ENCODE measurements at regions of chr16 and their contacts with region 1.

Region 1: DNA sequence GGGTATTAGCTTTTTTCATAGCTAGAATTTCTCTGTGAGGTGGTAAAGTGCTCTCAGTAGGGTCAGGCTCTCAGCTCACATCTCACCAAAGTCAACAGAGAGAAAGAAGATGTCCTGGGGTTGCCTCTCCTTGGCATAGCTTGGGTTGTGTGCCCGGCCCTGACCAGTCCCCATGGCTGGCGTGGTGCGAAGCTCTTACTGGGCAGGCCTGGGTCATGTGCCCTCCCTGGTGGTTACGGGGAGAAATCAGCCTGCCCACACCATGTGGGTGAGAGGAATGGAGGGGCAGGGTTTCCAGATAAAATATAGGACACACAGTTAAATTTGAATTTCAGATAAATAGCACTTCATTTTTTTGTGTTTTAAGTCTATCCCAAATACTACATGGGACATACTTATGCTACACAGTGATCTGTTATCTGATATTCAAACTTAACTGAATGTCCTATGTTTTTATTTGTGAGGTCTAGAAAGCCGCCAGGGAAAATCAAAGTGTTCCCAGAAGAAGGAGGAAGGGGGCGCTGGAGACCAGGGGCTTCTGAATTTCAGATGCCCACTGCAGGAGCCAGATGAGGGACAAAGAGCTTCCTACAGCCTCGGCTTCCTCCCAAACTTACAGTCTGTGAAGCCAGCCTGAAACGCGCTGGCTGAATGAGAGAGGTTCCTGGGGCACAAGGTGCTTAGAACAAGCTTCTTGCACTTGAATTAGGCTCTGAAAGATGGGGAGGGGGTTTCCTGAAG is 45.4 kb downstream of the NKD1 start:
- DNase-seq: no peak
- H3K4me3 ChIP-seq: no peak overlapping the region
- H3K27ac ChIP-seq: no peak overlapping the region
- H3K4me1 ChIP-seq: peaks cover 14% of the 10 kb centered on the region
- H3K27me3 ChIP-seq: no peaks in the 10 kb centered on the region
- CTCF ChIP-seq: peak in 1 of 4 experiments; percentile 9
- POLR2A ChIP-seq: no peak

Region 2: DNA sequence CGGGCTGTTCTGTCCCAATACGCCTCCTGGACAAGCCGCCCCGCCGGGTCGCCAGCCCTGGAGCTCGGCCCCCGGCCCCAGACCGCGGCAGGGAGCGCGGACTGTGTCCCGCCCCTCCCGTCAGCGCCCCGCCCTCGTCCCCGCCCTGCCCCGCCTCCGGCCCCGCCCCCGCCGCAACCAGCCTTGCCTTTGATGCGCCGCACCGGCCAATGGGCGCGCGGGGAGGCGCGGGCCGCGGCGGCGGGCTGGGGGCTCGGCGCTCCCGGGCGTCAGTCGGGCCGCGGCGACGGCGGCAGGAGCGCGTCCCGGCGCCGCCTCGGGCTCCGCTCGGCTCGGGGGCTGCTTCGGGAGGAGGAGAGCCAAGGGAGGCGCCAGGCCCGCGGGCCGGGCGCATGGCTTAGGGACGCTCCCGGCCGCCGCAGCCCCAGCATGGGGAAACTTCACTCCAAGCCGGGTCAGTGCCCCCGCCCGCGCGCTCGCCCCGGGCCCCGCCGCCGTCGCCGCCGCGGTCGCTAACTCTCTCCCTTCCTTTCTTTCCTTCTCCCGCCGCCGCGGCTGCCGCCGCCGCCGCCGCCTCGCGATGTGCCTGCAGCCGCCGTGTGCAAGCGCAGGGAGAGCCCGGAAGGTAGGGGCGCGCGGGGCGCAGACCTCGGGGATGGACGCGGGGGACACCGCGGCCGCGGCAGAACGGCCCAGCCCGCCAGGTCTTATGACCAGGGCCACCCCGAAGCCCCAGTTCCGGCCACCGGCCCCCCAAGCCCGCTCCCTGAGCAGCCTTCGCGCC is 45.3 kb before region 1 on chr16 and contains the start of gene NKD1:
- intact Hi-C with region 1: loop called (anchors 5 kb)
- DNase-seq: peak; percentile 68
- H3K4me3 ChIP-seq: peak within 1 kb of the TSS; percentile 63 to 77
- H3K27ac ChIP-seq: peak within 1 kb of the TSS; percentile 41 to 72
- H3K4me1 ChIP-seq: no peaks in the 10 kb centered on the region
- H3K27me3 ChIP-seq: no peaks in the 10 kb centered on the region
- CTCF ChIP-seq: peak in 1 of 4 experiments; percentile 2
- POLR2A ChIP-seq: no peak
- total RNA-seq, gene NKD1: 7.0 to 13.8 TPM

Region 3: GRCh38 chr16:50627419-50627818 is 33.8 kb after region 1 on chr16:
- intact Hi-C with region 1: loop called (anchors 5 kb)
- DNase-seq: peak; percentile 38
- H3K4me3 ChIP-seq: no peak overlapping the region
- H3K27ac ChIP-seq: no peak overlapping the region
- H3K4me1 ChIP-seq: no peaks in the 10 kb centered on the region
- H3K27me3 ChIP-seq: no peaks in the 10 kb centered on the region
- CTCF ChIP-seq: peak in 2 of 4 experiments; percentile 51 to 61
- POLR2A ChIP-seq: no peak

Measured in prostate gland (tissue), 2 donors.